Dendritic cell treated with granulocyte-macrophage colony-stimulating factor and Interleukin-4, amounts not matched to agents 40 ng/mL and 50 ng/mL, for 4 days (primary cell): ENCODE measurements at regions of chr5 and their contacts with region 1.

Region 1: DNA sequence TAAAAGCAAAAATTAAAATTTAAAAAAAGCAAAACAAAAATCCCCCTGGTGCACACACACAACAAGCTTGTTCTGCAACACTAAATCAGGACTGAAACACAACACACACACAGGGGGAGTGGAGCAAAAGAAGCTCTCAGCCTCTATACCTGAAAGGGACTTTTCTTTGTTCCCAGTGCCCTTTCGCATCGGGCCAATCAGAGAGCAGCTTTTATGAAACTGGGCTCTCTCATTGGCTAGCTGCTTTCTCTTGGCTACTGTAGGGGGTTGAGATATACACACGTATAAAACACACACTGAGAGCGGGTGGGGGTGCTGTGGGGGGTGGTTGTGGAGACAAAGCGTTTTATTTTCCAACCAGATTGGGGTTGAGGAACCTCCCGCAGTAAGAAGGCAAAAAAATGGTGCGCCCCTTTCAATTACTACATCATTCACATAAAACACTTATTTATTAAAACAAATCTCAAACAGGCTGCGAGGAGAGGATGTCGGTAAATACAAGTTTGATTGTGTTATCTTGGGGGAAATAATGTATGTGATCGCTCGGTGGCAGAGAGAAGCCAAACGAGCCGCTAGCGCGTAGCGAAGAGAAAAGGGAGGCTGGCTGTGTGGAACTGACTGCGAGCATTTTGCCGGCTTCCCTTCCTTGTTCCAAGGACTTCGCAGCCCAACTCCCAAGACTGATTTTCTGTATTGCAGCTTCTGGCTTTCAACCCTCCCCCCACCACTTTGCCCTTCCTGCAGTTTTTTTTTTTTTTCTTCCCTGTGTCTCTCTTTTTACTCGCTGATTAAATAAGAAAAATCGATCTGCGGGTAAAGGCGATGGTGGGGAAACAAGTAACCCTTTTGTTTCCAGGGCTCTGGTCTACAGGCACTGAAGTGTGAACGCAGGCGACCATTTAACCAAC is 2.5 kb upstream of the ZNF608 start:
- H3K4me3 Mint-ChIP-seq: peak overlapping the region; percentile 74
- H3K27ac Mint-ChIP-seq: no peak overlapping the region
- H3K4me1 Mint-ChIP-seq: peaks cover 40% of the 10 kb centered on the region
- H3K27me3 Mint-ChIP-seq: peaks cover 36% of the 10 kb centered on the region

Region 2: DNA sequence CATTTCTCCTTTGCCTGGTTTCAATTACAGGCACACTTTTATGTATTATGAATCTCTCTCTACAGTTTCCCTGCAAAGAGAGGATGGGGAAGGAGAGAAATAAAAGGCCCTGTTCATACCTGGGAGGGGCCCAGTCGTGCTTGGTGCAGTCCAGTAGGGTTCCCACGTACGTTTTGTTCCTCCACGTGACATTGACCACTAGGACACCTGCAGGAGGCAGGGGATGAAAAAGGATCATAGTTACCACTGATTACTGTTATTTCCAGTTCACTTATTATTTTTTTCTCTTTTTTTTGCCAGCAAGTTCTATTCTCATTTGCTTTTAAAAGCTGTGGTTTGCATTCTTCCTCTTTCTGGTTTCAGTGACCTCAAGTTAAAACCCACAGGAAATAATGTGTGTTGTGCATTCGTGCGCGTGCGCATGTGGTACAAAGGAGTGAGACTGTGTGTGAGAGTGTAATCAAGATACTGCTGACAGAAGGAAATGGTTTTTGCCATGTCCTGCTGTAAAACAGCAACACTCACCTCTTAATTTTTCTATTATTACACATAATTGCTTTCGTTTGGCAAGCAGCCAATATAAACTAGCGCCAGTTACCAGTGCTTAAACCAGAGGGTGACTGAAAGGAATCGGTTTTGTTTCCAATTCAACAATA is 99.3 kb before region 1 on chr5:
- intact Hi-C with region 1: loop called (anchors 2 kb)
- H3K4me3 Mint-ChIP-seq: no peak overlapping the region
- H3K27ac Mint-ChIP-seq: no peak overlapping the region
- H3K4me1 Mint-ChIP-seq: peaks cover 38% of the 10 kb centered on the region
- H3K27me3 Mint-ChIP-seq: peaks cover 70% of the 10 kb centered on the region

Region 3: DNA sequence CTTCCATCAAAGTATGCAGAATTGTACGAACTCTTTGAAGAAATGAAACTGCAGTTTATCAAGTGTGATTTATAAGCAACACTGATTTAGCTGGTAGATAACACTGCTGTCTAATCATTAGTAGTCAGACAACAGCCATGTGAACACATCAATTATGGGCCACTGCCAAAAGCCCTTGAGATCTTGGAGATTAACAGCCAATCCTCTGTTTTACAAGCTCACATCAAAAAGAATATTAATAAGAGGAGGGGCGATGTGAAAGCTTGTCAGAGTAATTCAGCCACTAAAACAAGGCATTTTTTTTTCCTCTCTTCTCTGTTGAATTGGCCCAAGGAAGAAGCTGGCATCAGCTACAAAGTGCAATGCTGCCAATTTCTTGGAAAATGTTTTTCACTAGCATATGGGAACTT is 30.6 kb before region 1 on chr5:
- intact Hi-C with region 1: no loop called
- H3K4me3 Mint-ChIP-seq: no peak overlapping the region
- H3K27ac Mint-ChIP-seq: no peak overlapping the region
- H3K4me1 Mint-ChIP-seq: peaks cover 5% of the 10 kb centered on the region
- H3K27me3 Mint-ChIP-seq: no peaks in the 10 kb centered on the region